K562 (cell line): ENCODE measurements at regions of chr6 and their contacts with region 1.

Region 1: GRCh38 chr6:118580585-118581419 is 32.7 kb downstream of the PLN start:
- DNase-seq: peak; percentile 37 to 72 (median 40)
- ATAC-seq: peak; percentile 93
- H3K4me3 ChIP-seq: no peak overlapping the region
- H3K27ac ChIP-seq: no peak overlapping the region
- H3K4me1 ChIP-seq: peaks cover 0 to 14% of the 10 kb centered on the region in 2 experiments; a peak in 3 of 5 replicates
- H3K27me3 ChIP-seq: no peaks in the 10 kb centered on the region
- CTCF ChIP-seq: peak; percentile 60 to 65 (median 61)
- EP300 ChIP-seq: no peak
- POLR2A ChIP-seq: no peak
- RAD21 ChIP-seq: peak; percentile 65 to 74

Region 2: GRCh38 chr6:118567974-118568373 is 12.8 kb before region 1 on chr6:
- CTCF ChIA-PET with region 1: no interaction called
- POLR2A ChIA-PET with region 1: no interaction called
- in situ Hi-C with region 1: no loop called
- intact Hi-C with region 1: no loop called
- DNase-seq: no peak
- ATAC-seq: no peak; the same call in 2 of the 3 replicates
- H3K4me3 ChIP-seq: no peak overlapping the region
- H3K27ac ChIP-seq: no peak overlapping the region
- H3K4me1 ChIP-seq: no peaks in the 10 kb centered on the region; a peak in 1 of 5 replicates
- H3K27me3 ChIP-seq: no peaks in the 10 kb centered on the region
- CTCF ChIP-seq: no peak
- EP300 ChIP-seq: no peak
- POLR2A ChIP-seq: no peak
- RAD21 ChIP-seq: no peak

Region 3: GRCh38 chr6:118618679-118619377 is 38.0 kb after region 1 on chr6:
- CTCF ChIA-PET with region 1: no interaction called
- POLR2A ChIA-PET with region 1: no interaction called
- in situ Hi-C with region 1: no loop called
- intact Hi-C with region 1: loop called (anchors 2 kb)
- DNase-seq: peak; percentile 32 to 59 (median 39)
- ATAC-seq: peak; percentile 90
- H3K4me3 ChIP-seq: no peak overlapping the region
- H3K27ac ChIP-seq: no peak overlapping the region
- H3K4me1 ChIP-seq: peaks cover 0 to 7% of the 10 kb centered on the region in 2 experiments; a peak in 3 of 5 replicates
- H3K27me3 ChIP-seq: no peaks in the 10 kb centered on the region
- CTCF ChIP-seq: peak; percentile 80 to 92 (median 80)
- EP300 ChIP-seq: no peak
- POLR2A ChIP-seq: no peak
- RAD21 ChIP-seq: peak; percentile 75 to 82